ENCODE measurements at regions of chr9 and their contacts with region 1.

Region 1: DNA sequence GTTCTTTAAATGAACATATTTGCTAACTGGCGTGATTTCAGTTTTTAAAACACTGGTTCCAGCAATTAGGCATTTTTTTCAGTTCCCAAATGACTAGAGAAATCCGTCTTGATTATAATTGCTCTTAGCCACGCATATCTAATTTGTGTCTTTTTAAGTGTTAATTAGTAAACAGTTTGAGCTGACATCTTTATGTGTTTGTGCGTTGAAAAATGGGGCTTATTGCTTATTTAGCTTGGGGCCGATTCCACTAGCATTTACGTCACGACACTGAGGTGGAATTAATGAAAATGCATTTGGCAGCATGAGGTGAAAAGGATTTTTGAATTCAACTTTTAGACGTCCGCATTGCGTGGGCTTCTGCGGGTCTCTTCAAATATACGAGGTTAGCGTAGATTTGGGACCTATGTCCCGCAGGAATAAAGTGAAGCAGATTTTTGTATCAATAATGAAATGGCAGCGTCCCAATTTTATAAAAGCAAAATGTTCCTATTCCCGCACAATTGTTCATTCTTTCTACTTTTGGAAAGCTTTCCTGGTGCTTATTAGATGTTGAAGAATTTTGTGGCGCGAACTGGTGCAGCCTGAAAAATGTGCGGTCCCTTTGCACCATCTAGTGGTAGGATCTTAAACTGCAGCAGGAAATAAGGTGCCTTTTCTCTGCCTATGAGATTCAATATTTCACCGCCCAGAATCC is 122.7 kb upstream of the LMX1B start:
- DNase-seq: peak; percentile 70
- ATAC-seq: 0 out of 2 replicates have a peak, but pooled peaks have one; percentile 53
- H3K4me3 ChIP-seq: no peak overlapping the region
- H3K27ac ChIP-seq: no peak overlapping the region
- H3K4me1 ChIP-seq: no peaks in the 10 kb centered on the region
- H3K27me3 ChIP-seq: no peaks in the 10 kb centered on the region
- CTCF ChIP-seq: peak; percentile 86

Region 2: GRCh38 chr9:126261584-126262356 is 229.2 kb before region 1 on chr9:
- CTCF ChIA-PET with region 1: no interaction called
- POLR2A ChIA-PET with region 1: interaction called, 15 read pairs
- intact Hi-C with region 1: no loop called
- DNase-seq: no peak
- ATAC-seq: no peak
- H3K4me3 ChIP-seq: no peak overlapping the region
- H3K27ac ChIP-seq: no peak overlapping the region
- H3K4me1 ChIP-seq: no peaks in the 10 kb centered on the region
- H3K27me3 ChIP-seq: peaks cover 83% of the 10 kb centered on the region
- CTCF ChIP-seq: no peak

Region 3: GRCh38 chr9:126301985-126302603 is 188.9 kb before region 1 on chr9:
- CTCF ChIA-PET with region 1: no interaction called
- POLR2A ChIA-PET with region 1: no interaction called
- intact Hi-C with region 1: loop called (anchors 1 kb)
- DNase-seq: peak; percentile 74
- ATAC-seq: peak; percentile 85
- H3K4me3 ChIP-seq: no peak overlapping the region
- H3K27ac ChIP-seq: no peak overlapping the region
- H3K4me1 ChIP-seq: no peaks in the 10 kb centered on the region
- H3K27me3 ChIP-seq: no peaks in the 10 kb centered on the region
- CTCF ChIP-seq: peak; percentile 80

Region 4: DNA sequence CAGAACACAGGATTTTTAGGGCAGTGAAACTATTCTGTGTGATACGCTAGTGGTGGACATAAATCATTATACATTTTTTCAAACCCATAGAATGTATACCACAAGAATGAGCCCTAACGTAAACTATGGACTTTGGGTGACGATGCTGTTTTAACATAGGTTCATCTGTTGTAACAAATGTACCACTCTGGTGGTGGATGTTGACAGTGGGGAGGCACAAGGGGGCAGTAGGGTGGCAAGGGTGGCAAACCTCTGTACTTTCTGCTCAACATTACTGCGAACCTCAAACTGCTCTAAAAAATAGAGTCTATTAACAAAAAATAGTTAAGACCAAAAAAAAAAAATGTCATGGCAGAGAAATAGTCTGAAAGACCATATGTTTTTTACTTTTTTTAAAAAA is 173.5 kb before region 1 on chr9:
- CTCF ChIA-PET with region 1: no interaction called
- POLR2A ChIA-PET with region 1: no interaction called
- intact Hi-C with region 1: loop called (anchors 1 kb)
- DNase-seq: peak; percentile 41
- ATAC-seq: peak; percentile 55; the same call in 1 of the 2 replicates
- H3K4me3 ChIP-seq: no peak overlapping the region
- H3K27ac ChIP-seq: no peak overlapping the region
- H3K4me1 ChIP-seq: no peaks in the 10 kb centered on the region
- H3K27me3 ChIP-seq: no peaks in the 10 kb centered on the region
- CTCF ChIP-seq: peak; percentile 60

Region 5: DNA sequence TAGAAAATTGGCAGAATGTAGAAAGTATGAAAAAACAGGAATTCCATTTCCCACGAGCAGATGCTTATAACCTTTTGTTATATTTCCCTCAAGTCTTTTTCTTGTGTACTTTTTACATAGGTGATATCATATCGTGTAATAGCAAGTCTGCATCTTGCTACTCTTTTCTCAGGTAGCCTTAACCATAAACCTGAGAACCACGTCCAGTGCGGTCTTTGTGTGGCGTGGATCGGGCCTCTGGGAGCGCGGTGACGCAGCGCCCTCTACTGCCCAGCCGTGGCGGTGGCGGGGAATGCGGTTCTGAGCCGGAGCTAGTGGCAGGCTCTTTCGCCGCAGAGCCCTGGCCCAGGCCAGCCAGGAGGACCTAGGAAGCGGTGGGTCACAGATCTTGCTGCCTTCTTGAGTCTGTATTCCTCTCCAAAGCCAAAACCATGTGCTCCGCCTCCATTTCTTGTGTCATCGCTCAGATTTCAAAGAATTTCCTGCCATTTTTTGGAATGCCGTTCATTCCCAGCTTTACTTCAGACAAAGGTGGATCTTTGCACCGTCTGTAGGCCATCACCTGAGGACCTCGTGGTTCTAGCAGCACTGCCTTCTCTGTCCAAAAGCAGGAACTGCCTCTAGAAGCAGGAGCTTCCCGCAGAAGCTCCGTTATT is 92.5 kb before region 1 on chr9:
- CTCF ChIA-PET with region 1: interaction called, 5 read pairs
- POLR2A ChIA-PET with region 1: no interaction called
- intact Hi-C with region 1: loop called (anchors 2 kb)
- DNase-seq: peak; percentile 66
- ATAC-seq: peak; percentile 87
- H3K4me3 ChIP-seq: no peak overlapping the region
- H3K27ac ChIP-seq: no peak overlapping the region
- H3K4me1 ChIP-seq: peaks cover 17% of the 10 kb centered on the region
- H3K27me3 ChIP-seq: no peaks in the 10 kb centered on the region
- CTCF ChIP-seq: peak; percentile 89